Esophagus muscularis mucosa (tissue), 4 donors: ENCODE measurements at regions of chr5 and their contacts with region 1.

Region 1: GRCh38 chr5:154940772-154941620 is at the start of gene MRPL22:
- DNase-seq: peak; percentile 98
- H3K4me3 ChIP-seq: peak within 1 kb of the TSS; percentile 69 to 80 (median 74)
- H3K27ac ChIP-seq: peak within 1 kb of the TSS; percentile 68 to 84 (median 80)
- H3K4me1 ChIP-seq: peaks cover 35 to 64% (median 61%) of the 10 kb centered on the region in 4 donors
- H3K27me3 ChIP-seq: peaks cover 0 to 5% (median 0%) of the 10 kb centered on the region in 4 donors
- CTCF ChIP-seq: peak in 1 of 3 experiments; percentile 11
- EP300 ChIP-seq: no peak
- POLR2A ChIP-seq: no peak
- total RNA-seq, gene MRPL22: 8.7 to 31.4 (median 17.2) TPM

Region 2: GRCh38 chr5:154445422-154446182 is 495.4 kb before region 1 on chr5 and contains the start of gene SAP30L:
- intact Hi-C with region 1: loop called (anchors 10 kb)
- DNase-seq: peak; percentile 99
- H3K4me3 ChIP-seq: peak within 1 kb of the TSS; percentile 87 to 99 (median 97)
- H3K27ac ChIP-seq: peak within 1 kb of the TSS; percentile 86 to 95 (median 90)
- H3K4me1 ChIP-seq: peaks cover 27 to 50% (median 39%) of the 10 kb centered on the region in 4 donors
- H3K27me3 ChIP-seq: no peaks in the 10 kb centered on the region
- CTCF ChIP-seq: no peak
- EP300 ChIP-seq: no peak
- POLR2A ChIP-seq: no peak
- total RNA-seq, gene SAP30L: 34.9 to 54.9 (median 46.2) TPM

Region 3: DNA sequence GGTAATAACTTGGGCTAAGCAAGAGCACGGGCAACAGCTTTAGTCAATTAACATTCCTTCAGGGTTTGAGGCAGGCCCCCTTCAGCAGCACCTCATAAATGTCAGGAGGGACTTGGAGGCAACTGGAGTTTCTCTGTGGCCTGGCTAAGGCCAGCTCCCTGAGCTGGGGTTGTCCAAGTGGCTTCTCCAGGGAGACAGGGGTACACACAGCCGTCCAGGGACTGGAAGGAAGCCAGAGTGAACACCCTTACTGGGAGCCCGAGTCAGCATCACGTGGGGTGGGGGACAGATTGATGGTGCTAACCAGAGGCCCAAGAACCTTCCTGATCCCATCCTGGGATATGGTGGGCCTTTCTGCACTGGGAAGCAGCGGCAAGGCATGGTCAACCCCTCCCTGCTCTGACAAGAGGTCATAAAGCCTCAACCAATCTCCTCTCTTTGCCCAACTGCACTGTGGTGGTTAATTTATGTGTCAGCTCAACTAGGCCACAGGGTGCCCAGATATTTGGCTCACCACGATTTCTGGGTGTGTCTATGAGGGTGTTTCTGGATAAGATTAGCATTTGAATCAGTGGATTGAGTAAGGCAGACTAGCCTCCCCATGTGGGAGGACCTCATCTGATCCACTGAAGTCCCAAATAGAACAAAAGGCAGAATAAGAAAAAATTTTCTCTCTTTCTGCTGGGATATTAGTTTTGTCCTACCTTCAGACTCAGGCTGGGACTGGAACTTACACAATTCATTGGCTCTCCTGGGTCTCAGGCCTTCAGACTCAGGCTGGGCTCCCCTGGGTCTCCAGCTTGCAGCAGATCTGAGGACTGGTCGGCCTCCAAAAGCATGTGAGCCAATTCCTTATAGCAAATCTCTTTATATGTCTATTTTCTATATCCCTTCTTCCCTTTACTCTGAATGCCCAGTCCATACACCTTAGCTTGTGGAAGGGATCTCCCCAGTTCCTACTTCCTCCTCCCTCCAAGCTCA is 313.0 kb before region 1 on chr5:
- intact Hi-C with region 1: no loop called
- DNase-seq: no peak
- H3K4me3 ChIP-seq: no peak overlapping the region
- H3K27ac ChIP-seq: no peak overlapping the region
- H3K4me1 ChIP-seq: peaks cover 0 to 8% (median 3%) of the 10 kb centered on the region in 4 donors
- H3K27me3 ChIP-seq: peaks cover 0 to 6% (median 0%) of the 10 kb centered on the region in 4 donors
- CTCF ChIP-seq: no peak
- EP300 ChIP-seq: no peak
- POLR2A ChIP-seq: no peak

Region 4: GRCh38 chr5:154829589-154830218 is 111.3 kb before region 1 on chr5:
- intact Hi-C with region 1: no loop called
- DNase-seq: no peak
- H3K4me3 ChIP-seq: no peak overlapping the region
- H3K27ac ChIP-seq: no peak overlapping the region
- H3K4me1 ChIP-seq: peaks cover 2 to 6% (median 3%) of the 10 kb centered on the region in 4 donors
- H3K27me3 ChIP-seq: no peaks in the 10 kb centered on the region
- CTCF ChIP-seq: no peak
- EP300 ChIP-seq: no peak
- POLR2A ChIP-seq: no peak

Region 5: DNA sequence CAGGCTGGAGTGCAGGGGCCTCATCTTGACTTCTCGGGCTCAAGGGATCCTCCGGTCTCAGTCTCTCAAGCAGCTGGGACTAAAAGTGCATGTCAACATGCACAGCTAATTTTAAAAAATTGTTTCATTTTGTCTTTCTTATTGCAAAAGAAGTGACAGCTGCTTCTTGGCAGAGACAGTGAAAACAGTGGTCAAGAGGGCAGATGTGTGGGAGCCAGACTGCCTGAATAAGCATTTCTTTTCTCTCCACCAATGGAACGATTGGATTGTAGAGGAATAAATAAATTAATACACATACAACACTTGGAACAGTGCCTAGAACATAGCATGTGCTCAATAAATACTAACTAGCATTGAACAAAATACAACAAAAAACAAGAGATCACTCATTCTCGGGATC is 45.2 kb after region 1 on chr5:
- intact Hi-C with region 1: no loop called
- DNase-seq: no peak
- H3K4me3 ChIP-seq: no peak overlapping the region
- H3K27ac ChIP-seq: no peak overlapping the region
- H3K4me1 ChIP-seq: no peaks in the 10 kb centered on the region
- H3K27me3 ChIP-seq: peaks cover 0 to 2% (median 0%) of the 10 kb centered on the region in 4 donors
- CTCF ChIP-seq: no peak
- EP300 ChIP-seq: no peak
- POLR2A ChIP-seq: no peak

Region 6: GRCh38 chr5:155029240-155029639 is 88.2 kb after region 1 on chr5:
- intact Hi-C with region 1: no loop called
- DNase-seq: no peak
- H3K4me3 ChIP-seq: no peak overlapping the region
- H3K27ac ChIP-seq: no peak overlapping the region
- H3K4me1 ChIP-seq: no peaks in the 10 kb centered on the region
- H3K27me3 ChIP-seq: no peaks in the 10 kb centered on the region
- CTCF ChIP-seq: no peak
- EP300 ChIP-seq: no peak
- POLR2A ChIP-seq: no peak